CD8-positive, alpha-beta T cell (primary cell): ENCODE measurements at regions of chr22 and their contacts with region 1.

Region 1: GRCh38 chr22:24156913-24157821 is 24.1 kb upstream of the SUSD2 start:
- DNase-seq: peak; percentile 77 to 95 (median 91)
- ATAC-seq: peak; percentile 74
- H3K4me3 ChIP-seq: peak overlapping the region; percentile 98 to 99
- H3K4me3 Mint-ChIP-seq: peak overlapping the region; percentile 93
- H3K27ac ChIP-seq: peak overlapping the region; percentile 75 to 78
- H3K27ac Mint-ChIP-seq: peak overlapping the region; percentile 93
- H3K4me1 ChIP-seq: peaks cover 82% of the 10 kb centered on the region
- H3K4me1 Mint-ChIP-seq: peaks cover 84% of the 10 kb centered on the region
- H3K27me3 ChIP-seq: no peaks in the 10 kb centered on the region
- H3K27me3 Mint-ChIP-seq: no peaks in the 10 kb centered on the region
- CTCF ChIP-seq: peak; percentile 77

Region 2: GRCh38 chr22:23716811-23717801 is 440.1 kb before region 1 on chr22:
- CTCF ChIA-PET with region 1: no interaction called
- POLR2A ChIA-PET with region 1: no interaction called
- intact Hi-C with region 1: loop called (anchors 2 to 10 kb)
- DNase-seq: peak; percentile 66 to 91 (median 83)
- ATAC-seq: peak; percentile 96
- H3K4me3 ChIP-seq: peak overlapping the region; percentile 94 to 99
- H3K4me3 Mint-ChIP-seq: peak overlapping the region; percentile 82
- H3K27ac ChIP-seq: peak overlapping the region; percentile 75 to 90
- H3K27ac Mint-ChIP-seq: peak overlapping the region; percentile 88
- H3K4me1 ChIP-seq: peaks cover 15% of the 10 kb centered on the region
- H3K4me1 Mint-ChIP-seq: peaks cover 24% of the 10 kb centered on the region
- H3K27me3 ChIP-seq: no peaks in the 10 kb centered on the region
- H3K27me3 Mint-ChIP-seq: no peaks in the 10 kb centered on the region
- CTCF ChIP-seq: no peak

Region 3: DNA sequence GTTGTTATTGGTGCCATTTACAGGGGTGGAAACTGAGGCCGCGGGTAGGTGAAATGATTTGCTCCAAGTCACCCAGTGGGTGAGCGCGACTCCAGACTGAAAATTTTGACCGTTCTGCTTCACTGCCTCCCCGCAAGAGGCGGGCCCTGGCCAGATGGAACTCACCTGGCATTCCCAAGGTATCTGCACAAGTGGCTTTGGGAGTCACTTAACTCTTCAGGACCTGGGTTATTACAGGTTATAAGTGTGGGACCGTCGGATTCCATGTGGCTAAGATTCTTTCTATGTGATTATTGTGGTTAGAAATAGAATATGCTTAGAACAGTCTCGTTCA is 145.5 kb before region 1 on chr22:
- CTCF ChIA-PET with region 1: no interaction called
- POLR2A ChIA-PET with region 1: interaction called, 7 read pairs
- intact Hi-C with region 1: loop called in 1 of 2 experiments (anchors 2 kb)
- DNase-seq: no peak
- ATAC-seq: no peak
- H3K4me3 ChIP-seq: peak overlapping the region; percentile 71 to 87
- H3K4me3 Mint-ChIP-seq: peak overlapping the region; percentile 97
- H3K27ac ChIP-seq: peak overlapping the region; percentile 69 to 77
- H3K27ac Mint-ChIP-seq: peak overlapping the region; percentile 94
- H3K4me1 ChIP-seq: peaks cover 10% of the 10 kb centered on the region
- H3K4me1 Mint-ChIP-seq: peaks cover 40% of the 10 kb centered on the region
- H3K27me3 ChIP-seq: no peaks in the 10 kb centered on the region
- H3K27me3 Mint-ChIP-seq: no peaks in the 10 kb centered on the region
- CTCF ChIP-seq: no peak

Region 4: DNA sequence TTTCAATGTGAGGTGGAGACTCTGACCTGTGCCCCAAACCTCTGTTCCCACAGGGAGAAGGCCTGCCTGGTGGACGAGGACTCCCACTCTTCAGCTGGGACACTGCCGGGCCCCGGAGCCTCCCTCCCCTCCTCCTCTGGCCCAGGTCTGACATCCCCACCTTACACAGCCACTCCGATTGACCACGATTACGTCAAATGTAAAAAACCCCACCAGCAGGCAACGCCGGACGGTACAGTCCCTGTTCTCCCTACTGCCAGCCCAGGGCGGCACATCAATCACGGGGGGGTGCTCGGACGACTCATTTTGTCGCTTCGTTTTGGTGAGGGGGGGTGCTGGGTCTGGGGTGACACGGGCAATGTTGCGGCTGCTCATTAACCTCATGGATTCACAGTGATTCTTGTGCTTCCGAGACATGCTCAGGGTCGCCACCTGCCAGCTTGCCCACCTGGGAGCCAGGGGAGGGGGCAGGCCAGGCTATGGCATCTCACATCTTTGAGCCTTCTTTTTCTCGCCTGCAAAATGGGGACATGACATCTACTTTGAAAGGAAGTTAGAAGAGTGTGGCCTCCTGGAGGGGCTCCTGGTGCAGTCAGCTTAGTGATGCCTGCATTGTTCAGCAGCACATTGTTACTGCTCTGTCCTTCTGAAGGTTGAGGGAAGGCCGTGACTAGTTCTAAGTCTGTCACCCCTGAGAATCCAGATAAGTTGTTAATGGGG is 59.0 kb before region 1 on chr22:
- CTCF ChIA-PET with region 1: no interaction called
- POLR2A ChIA-PET with region 1: no interaction called
- intact Hi-C with region 1: no loop called
- DNase-seq: no peak
- ATAC-seq: no peak
- H3K4me3 ChIP-seq: no peak overlapping the region
- H3K4me3 Mint-ChIP-seq: no peak overlapping the region
- H3K27ac ChIP-seq: no peak overlapping the region
- H3K27ac Mint-ChIP-seq: no peak overlapping the region
- H3K4me1 ChIP-seq: no peaks in the 10 kb centered on the region
- H3K4me1 Mint-ChIP-seq: no peaks in the 10 kb centered on the region
- H3K27me3 ChIP-seq: no peaks in the 10 kb centered on the region
- H3K27me3 Mint-ChIP-seq: no peaks in the 10 kb centered on the region
- CTCF ChIP-seq: no peak

Region 5: GRCh38 chr22:24133187-24133965 is 23.8 kb before region 1 on chr22:
- CTCF ChIA-PET with region 1: interaction called, 273 read pairs
- POLR2A ChIA-PET with region 1: interaction called, 189 read pairs
- intact Hi-C with region 1: loop called (anchors 1 kb)
- DNase-seq: peak in 8 of 9 experiments; percentile 32 to 78 (median 62)
- ATAC-seq: peak; percentile 57
- H3K4me3 ChIP-seq: no peak overlapping the region
- H3K4me3 Mint-ChIP-seq: no peak overlapping the region
- H3K27ac ChIP-seq: peak overlapping the region; percentile 25 to 69
- H3K27ac Mint-ChIP-seq: peak overlapping the region; percentile 90
- H3K4me1 ChIP-seq: peaks cover 40% of the 10 kb centered on the region
- H3K4me1 Mint-ChIP-seq: peaks cover 38% of the 10 kb centered on the region
- H3K27me3 ChIP-seq: no peaks in the 10 kb centered on the region
- H3K27me3 Mint-ChIP-seq: no peaks in the 10 kb centered on the region
- CTCF ChIP-seq: peak; percentile 53

Region 6: GRCh38 chr22:24175160-24175808 is 18.1 kb after region 1 on chr22:
- CTCF ChIA-PET with region 1: interaction called, 153 read pairs
- POLR2A ChIA-PET with region 1: interaction called, 30 read pairs
- intact Hi-C with region 1: loop called in 1 of 2 experiments (anchors 2 kb)
- DNase-seq: peak; percentile 39 to 83 (median 69)
- ATAC-seq: peak; percentile 67
- H3K4me3 ChIP-seq: no peak overlapping the region
- H3K4me3 Mint-ChIP-seq: no peak overlapping the region
- H3K27ac ChIP-seq: peak overlapping the region; percentile 27 to 32
- H3K27ac Mint-ChIP-seq: peak overlapping the region; percentile 41
- H3K4me1 ChIP-seq: peaks cover 2% of the 10 kb centered on the region
- H3K4me1 Mint-ChIP-seq: peaks cover 9% of the 10 kb centered on the region
- H3K27me3 ChIP-seq: no peaks in the 10 kb centered on the region
- H3K27me3 Mint-ChIP-seq: no peaks in the 10 kb centered on the region
- CTCF ChIP-seq: peak; percentile 68

Region 7: GRCh38 chr22:24423519-24424000 is 266.4 kb after region 1 on chr22:
- CTCF ChIA-PET with region 1: no interaction called
- POLR2A ChIA-PET with region 1: no interaction called
- intact Hi-C with region 1: loop called (anchors 2 to 5 kb)
- DNase-seq: peak; percentile 33 to 82 (median 60)
- ATAC-seq: no peak
- H3K4me3 ChIP-seq: peak overlapping the region in 1 of 2 experiments; percentile 47
- H3K4me3 Mint-ChIP-seq: peak overlapping the region; percentile 72
- H3K27ac ChIP-seq: no peak overlapping the region
- H3K27ac Mint-ChIP-seq: no peak overlapping the region
- H3K4me1 ChIP-seq: peaks cover 32% of the 10 kb centered on the region
- H3K4me1 Mint-ChIP-seq: peaks cover 39% of the 10 kb centered on the region
- H3K27me3 ChIP-seq: no peaks in the 10 kb centered on the region
- H3K27me3 Mint-ChIP-seq: no peaks in the 10 kb centered on the region
- CTCF ChIP-seq: peak; percentile 89

Region 8: GRCh38 chr22:24555157-24556039 is 398.2 kb after region 1 on chr22 and contains the start of gene SNRPD3:
- CTCF ChIA-PET with region 1: no interaction called
- POLR2A ChIA-PET with region 1: no interaction called
- intact Hi-C with region 1: loop called (anchors 2 to 10 kb)
- DNase-seq: peak; percentile 99 to 100 (median 100)
- ATAC-seq: peak; percentile 86
- H3K4me3 ChIP-seq: peak within 1 kb of the TSS; percentile 70 to 96
- H3K4me3 Mint-ChIP-seq: peak within 1 kb of the TSS; percentile 93
- H3K27ac ChIP-seq: peak within 1 kb of the TSS; percentile 73 to 99
- H3K27ac Mint-ChIP-seq: peak within 1 kb of the TSS; percentile 98
- H3K4me1 ChIP-seq: peaks cover 35% of the 10 kb centered on the region
- H3K4me1 Mint-ChIP-seq: peaks cover 68% of the 10 kb centered on the region
- H3K27me3 ChIP-seq: no peaks in the 10 kb centered on the region
- H3K27me3 Mint-ChIP-seq: no peaks in the 10 kb centered on the region
- CTCF ChIP-seq: no peak
- total RNA-seq, gene SNRPD3: 33.1 to 35.0 TPM